ENCODE measurements at regions of chr3 and their contacts with region 1.

Region 1: DNA sequence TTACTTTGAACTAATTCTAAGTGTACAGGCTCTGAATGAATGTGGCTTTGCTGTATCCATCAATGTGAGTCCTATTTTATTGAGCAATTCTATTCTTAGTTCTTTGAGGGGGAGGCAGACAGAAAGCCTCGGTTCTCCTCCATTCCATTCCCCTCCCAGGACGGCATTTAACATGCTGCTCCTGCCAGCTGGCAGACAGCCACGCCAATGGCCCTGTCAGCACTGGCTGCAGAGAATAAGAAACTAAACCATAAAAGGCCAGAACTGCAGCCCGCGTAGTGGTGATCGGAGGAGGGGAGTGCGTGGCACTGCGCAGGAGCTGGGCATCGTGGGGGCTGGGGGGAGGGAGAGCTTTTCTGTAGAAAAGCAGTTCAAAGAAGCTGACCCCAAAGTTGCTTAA is 76.0 kb upstream of the HACD2 start:
- DNase-seq: peak; percentile 92 to 95 (median 94)
- ATAC-seq: peak; percentile 85 to 94 (median 90)
- H3K4me3 ChIP-seq: peak overlapping the region in 3 of 12 donors; percentile 5 to 10 (median 7)
- H3K27ac ChIP-seq: peak overlapping the region in 11 of 12 donors; percentile 46 to 84 (median 58)
- H3K4me1 ChIP-seq: peaks cover 25 to 64% (median 48%) of the 10 kb centered on the region in 12 donors
- H3K27me3 ChIP-seq: no peaks in the 10 kb centered on the region
- CTCF ChIP-seq: no peak
- POLR2A ChIP-seq: no peak

Region 2: DNA sequence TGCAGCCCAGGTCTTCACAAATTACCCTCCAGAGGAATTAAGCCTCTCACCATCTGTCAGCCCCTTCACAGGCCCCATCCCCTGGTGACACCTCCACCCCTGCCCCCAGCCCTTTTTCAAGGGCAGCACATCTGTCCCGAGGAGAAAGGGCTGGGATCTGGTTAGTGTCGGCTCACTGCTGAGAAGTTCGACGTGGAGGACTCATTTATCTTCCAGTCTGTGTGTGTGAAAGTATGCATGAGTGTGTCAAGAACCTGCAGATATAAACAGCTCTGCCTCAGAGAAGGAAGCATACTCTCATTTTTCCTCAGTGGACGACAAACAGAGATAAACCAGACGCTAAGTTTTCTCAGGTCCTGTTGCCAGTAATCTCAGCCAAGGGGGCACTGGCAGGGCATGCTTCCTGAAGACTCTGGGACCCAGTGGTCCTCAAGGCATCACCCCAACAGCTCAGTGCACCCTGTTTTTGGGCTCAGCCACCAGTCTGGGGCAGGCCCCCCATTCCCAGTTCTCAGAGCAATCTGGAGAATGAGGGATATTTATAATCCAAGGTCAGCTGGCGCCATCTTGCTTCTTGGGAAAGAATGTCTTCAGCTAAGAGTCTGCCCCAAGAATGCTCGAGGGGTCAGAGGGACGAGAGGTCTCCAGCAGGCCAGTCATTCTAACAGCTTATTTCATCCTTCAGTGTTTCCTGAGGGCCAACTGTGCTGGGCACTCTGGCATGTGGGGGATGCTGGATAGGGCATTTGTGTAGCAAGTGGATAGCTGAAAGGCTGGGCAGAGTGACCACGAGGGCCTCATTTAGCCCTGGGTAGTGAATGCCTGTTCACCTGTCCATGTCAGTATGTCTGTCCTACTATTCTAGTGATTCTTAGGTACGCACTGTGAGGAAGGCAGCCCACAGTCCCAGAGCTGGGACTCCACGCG is 285.6 kb before region 1 on chr3:
- intact Hi-C with region 1: no loop called
- DNase-seq: peak in 3 of 5 donors; percentile 55 to 76 (median 64)
- ATAC-seq: peak; percentile 34 to 63 (median 56)
- H3K4me3 ChIP-seq: no peak overlapping the region
- H3K27ac ChIP-seq: peak overlapping the region; percentile 60 to 96 (median 85)
- H3K4me1 ChIP-seq: peaks cover 12 to 98% (median 62%) of the 10 kb centered on the region in 12 donors
- H3K27me3 ChIP-seq: no peaks in the 10 kb centered on the region
- CTCF ChIP-seq: peak in 1 of 12 donors; percentile 14
- POLR2A ChIP-seq: no peak

Region 3: GRCh38 chr3:123694366-123695145 is 33.7 kb after region 1 on chr3:
- intact Hi-C with region 1: loop called in 2 of 10 experiments (anchors 2 to 5 kb)
- DNase-seq: no peak
- ATAC-seq: peak in 2 of 4 donors; percentile 44 to 70
- H3K4me3 ChIP-seq: peak overlapping the region in 3 of 12 donors; percentile 1 to 58 (median 5)
- H3K27ac ChIP-seq: peak overlapping the region; percentile 39 to 90 (median 68)
- H3K4me1 ChIP-seq: peaks cover 4 to 67% (median 45%) of the 10 kb centered on the region in 12 donors
- H3K27me3 ChIP-seq: no peaks in the 10 kb centered on the region
- CTCF ChIP-seq: no peak
- POLR2A ChIP-seq: no peak

Measured in heart left ventricle (tissue), 16 donors.